ENCODE measurements at regions of chr2 and their contacts with region 1.

Region 1: GRCh38 chr2:199861132-199861774 is 10.3 kb upstream of the FTCDNL1 start:
- DNase-seq: no peak
- H3K4me3 Mint-ChIP-seq: no peak overlapping the region
- H3K27ac Mint-ChIP-seq: no peak overlapping the region
- H3K4me1 Mint-ChIP-seq: no peaks in the 10 kb centered on the region
- H3K27me3 Mint-ChIP-seq: peaks cover 34% of the 10 kb centered on the region
- CTCF ChIP-seq: peak; percentile 49

Region 2: DNA sequence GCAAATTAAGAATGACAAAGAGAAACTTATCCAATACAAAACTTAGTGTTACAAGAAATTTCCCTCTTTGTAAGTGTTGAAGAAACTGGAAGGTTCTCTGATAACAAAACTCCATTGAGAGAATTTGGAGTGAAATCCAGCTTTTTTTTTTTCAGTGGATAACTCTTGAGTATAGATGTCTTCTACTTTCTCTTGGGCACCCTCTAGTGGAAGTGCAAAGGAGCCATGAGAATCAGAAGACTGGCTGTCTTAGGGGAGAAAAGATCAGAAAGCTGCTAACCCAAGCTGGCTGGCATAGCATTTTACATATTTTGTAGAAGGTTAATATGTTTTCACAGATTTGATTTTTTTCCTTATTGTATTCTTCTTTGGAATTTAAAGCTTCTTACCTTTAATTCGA is 264.7 kb before region 1 on chr2:
- CTCF ChIA-PET with region 1: no interaction called
- intact Hi-C with region 1: loop called (anchors 10 kb)
- DNase-seq: peak; percentile 42
- H3K4me3 Mint-ChIP-seq: no peak overlapping the region
- H3K27ac Mint-ChIP-seq: no peak overlapping the region
- H3K4me1 Mint-ChIP-seq: no peaks in the 10 kb centered on the region
- H3K27me3 Mint-ChIP-seq: peaks cover 24% of the 10 kb centered on the region
- CTCF ChIP-seq: peak; percentile 54

Region 3: DNA sequence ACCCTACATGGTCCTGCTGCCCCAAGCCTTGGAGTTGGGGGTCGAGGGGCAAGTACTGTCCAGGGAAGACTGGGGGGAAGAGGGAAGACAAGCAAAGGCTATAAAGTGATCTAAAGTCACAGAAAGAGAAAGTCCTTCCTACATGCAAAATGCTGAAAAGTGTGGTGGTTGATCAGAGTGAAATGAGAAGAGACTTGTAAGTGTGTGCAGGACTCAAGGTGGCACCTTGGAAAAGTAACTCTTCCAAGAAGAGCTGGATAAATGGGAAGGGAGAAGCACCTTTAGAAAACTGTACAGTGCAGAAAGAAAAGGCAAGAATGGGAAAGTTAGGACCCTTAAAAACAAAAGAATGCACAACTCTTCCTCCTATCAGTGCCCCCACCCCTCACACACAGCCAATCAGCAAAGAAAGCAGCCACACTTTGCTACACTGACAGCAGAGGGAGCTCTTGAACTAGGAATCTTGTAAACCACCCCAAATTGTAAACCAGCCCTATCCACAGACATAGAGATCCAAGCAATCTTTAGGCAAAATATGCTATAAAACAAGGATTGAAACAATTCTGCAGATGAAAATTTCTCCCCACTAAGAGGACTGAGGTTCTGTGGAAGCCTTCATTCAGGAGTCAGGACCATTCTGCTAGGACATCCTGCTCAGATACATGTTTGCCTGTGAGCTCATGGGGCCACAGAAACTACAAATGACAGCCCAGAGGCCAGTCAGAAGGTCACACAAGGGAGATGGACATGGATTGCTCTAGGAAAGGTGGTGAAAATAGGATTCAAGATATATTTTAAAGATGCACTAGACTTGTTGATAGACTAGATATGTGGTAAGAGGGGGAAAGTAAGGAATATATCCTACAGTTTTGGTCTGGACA is 156.7 kb before region 1 on chr2:
- CTCF ChIA-PET with region 1: interaction called, 4 read pairs
- intact Hi-C with region 1: loop called (anchors 1 kb)
- DNase-seq: peak; percentile 61
- H3K4me3 Mint-ChIP-seq: no peak overlapping the region
- H3K27ac Mint-ChIP-seq: no peak overlapping the region
- H3K4me1 Mint-ChIP-seq: no peaks in the 10 kb centered on the region
- H3K27me3 Mint-ChIP-seq: peaks cover 7% of the 10 kb centered on the region
- CTCF ChIP-seq: peak; percentile 78

Region 4: GRCh38 chr2:199739413-199740110 is 121.7 kb before region 1 on chr2:
- CTCF ChIA-PET with region 1: no interaction called
- intact Hi-C with region 1: loop called (anchors 2 kb)
- DNase-seq: peak; percentile 75
- H3K4me3 Mint-ChIP-seq: no peak overlapping the region
- H3K27ac Mint-ChIP-seq: no peak overlapping the region
- H3K4me1 Mint-ChIP-seq: peaks cover 16% of the 10 kb centered on the region
- H3K27me3 Mint-ChIP-seq: peaks cover 25% of the 10 kb centered on the region
- CTCF ChIP-seq: peak; percentile 94

Region 5: GRCh38 chr2:199848389-199849130 is 12.7 kb before region 1 on chr2:
- CTCF ChIA-PET with region 1: interaction called, 10 read pairs
- intact Hi-C with region 1: no loop called
- DNase-seq: no peak
- H3K4me3 Mint-ChIP-seq: no peak overlapping the region
- H3K27ac Mint-ChIP-seq: no peak overlapping the region
- H3K4me1 Mint-ChIP-seq: peaks cover 9% of the 10 kb centered on the region
- H3K27me3 Mint-ChIP-seq: peaks cover 13% of the 10 kb centered on the region
- CTCF ChIP-seq: no peak

Region 6: GRCh38 chr2:199922856-199923255 is 61.6 kb after region 1 on chr2:
- CTCF ChIA-PET with region 1: no interaction called
- intact Hi-C with region 1: no loop called
- DNase-seq: no peak
- H3K4me3 Mint-ChIP-seq: peak overlapping the region; percentile 12
- H3K27ac Mint-ChIP-seq: no peak overlapping the region
- H3K4me1 Mint-ChIP-seq: peaks cover 17% of the 10 kb centered on the region
- H3K27me3 Mint-ChIP-seq: no peaks in the 10 kb centered on the region
- CTCF ChIP-seq: no peak

Region 7: DNA sequence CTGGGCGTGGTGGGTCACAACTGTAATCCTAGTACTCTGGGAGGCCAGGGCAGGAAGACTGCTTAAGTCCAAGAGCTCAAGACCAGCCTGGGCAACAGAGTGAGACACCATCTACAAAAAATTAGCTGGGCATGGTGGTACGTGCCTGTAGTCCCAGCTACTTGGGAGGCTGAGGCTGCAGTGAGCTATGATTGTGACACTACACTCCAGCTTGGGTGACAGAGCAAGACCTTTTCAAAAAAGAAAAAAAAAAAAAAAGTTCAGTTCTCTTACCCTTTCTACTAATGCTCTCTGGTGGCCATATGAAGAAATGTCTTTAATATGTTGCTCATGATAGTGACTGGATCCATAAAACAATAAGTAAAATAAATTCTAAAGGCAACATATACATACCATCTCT is 79.1 kb after region 1 on chr2:
- CTCF ChIA-PET with region 1: no interaction called
- intact Hi-C with region 1: loop called (anchors 5 kb)
- DNase-seq: no peak
- H3K4me3 Mint-ChIP-seq: no peak overlapping the region
- H3K27ac Mint-ChIP-seq: no peak overlapping the region
- H3K4me1 Mint-ChIP-seq: no peaks in the 10 kb centered on the region
- H3K27me3 Mint-ChIP-seq: no peaks in the 10 kb centered on the region
- CTCF ChIP-seq: no peak